ENCODE measurements at regions of chr18 and their contacts with region 1.

Region 1: GRCh38 chr18:5868218-5869115 is 26.9 kb downstream of the TMEM200C start:
- DNase-seq: peak; percentile 74
- ATAC-seq: peak; percentile 89 to 92

Region 2: GRCh38 chr18:5772306-5773105 is 96.0 kb before region 1 on chr18:
- intact Hi-C with region 1: no loop called
- DNase-seq: no peak
- ATAC-seq: no peak

Region 3: DNA sequence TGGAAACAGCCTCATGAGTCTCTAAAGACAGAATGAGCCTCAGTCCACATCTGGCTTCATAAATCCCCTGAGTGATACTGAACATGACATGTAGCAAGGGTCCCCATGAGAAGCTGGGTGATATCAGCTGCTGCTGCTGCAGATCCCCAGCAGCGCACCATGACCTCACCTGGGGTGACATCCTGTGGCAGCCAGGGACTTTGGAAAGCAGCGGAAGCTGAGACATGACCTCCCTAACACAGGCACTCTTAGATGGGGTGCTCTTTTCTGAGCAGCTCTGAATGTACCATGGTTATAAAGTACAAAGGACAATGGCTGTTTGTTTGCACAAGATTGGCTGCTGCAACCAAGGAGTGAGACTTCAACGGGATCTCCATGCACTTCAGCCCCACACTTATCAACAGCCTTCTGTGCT is 101.5 kb after region 1 on chr18:
- intact Hi-C with region 1: no loop called
- DNase-seq: no peak
- ATAC-seq: no peak

Region 4: DNA sequence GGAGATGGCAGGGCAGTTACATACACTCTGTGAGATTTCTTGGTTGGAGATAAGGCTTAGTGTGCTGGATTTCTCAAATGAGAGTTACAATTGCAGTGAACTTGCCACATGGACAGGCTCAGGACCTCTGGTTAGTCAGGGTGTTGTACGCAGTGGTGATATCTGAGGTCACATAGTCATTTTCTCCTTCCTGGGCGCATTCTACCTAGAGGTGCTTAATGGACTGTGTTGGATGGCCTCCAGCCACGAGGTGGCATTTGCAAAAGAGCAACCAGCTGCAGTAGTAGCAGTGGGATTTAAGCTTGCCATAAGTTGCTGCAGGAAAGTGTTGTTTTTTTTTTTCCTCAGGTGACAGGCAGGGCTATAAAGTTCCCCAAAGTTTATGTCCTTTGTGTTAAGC is 200.6 kb after region 1 on chr18:
- intact Hi-C with region 1: no loop called
- DNase-seq: no peak
- ATAC-seq: no peak

Region 5: DNA sequence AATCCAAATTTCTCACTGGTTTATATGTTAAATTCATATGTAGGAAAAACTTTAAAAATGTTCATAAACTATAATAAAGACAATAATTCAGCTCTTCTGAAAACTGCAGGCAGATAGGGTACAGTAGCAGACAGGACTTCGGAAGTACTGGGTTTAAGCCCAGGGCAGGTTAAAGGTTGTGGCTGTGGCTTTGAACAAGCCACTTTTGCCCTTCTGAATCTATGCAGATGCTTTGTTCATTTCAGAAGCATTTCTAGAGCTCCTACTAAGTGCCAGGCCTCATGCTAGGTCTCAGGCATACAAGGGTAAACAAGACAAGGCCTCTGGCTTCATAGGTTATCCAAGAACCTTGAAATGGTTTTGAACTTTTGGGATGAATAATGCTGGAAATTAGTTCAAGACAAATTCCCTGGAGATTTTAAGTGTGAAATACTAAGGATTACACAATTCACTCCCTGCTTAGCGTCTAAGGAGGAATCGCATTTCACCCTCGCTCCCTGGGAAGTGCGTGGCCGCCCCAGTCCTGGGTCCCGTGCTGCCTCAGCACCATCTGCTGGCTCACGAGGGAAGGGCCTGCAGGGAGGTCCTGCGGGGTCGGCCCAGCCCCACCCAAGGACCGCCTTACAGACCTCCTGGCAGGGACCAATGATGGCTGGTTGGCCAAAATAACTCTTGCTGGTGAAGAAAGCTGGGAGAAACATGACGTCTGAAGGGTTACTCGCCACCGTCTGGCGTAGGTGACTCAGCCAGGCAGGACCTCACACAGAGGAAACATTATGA is 613.9 kb after region 1 on chr18:
- intact Hi-C with region 1: loop called (anchors 5 to 10 kb)
- DNase-seq: peak; percentile 86
- ATAC-seq: peak; percentile 99 to 100